ENCODE measurements at regions of chr17 and their contacts with region 1.

Region 1: DNA sequence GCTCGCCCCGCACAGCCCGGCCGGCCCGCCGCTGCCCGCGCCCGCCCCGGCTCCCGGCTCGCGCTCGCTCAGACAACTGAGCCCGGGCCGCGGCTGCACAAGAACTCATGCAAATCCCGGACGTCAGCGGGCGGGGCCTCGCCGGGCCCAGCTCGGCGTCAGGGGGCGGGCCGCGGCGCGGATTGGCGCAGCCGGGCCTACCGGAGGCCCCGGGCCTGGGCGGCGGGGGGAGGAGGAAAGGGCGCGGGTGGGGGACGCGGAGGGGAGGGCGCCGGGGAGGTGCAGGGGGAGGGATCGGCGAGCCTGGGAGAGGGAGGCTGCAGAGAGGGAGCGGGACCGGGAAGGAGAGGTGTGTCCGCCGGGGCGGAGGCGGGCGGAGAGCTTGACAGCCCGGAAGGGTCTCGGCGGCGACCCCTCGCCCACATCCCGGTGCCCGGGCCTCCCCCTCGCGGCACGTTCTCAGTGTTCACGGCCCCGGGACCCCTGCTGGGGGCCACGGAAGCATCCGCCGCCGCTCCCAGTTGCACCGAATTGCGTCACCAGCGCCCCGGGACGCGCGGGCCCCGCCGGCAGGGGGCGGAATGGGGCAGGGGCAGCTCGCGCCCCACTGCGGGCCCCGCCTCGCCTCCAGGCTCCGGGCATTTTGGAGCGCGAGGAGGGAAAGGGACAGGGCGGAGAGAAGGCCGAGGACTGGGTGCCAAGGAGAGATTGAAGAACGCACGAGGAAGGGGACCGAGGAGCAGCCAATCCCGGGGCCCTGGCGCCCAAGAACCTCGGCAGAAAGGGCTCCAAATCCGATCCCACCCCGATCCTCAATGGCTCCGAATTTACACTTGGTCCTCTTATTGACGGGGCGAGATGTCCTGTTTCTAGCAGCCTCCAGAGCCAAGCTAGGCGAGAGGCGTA is at the start of gene CBX4:
- DNase-seq: peak; percentile 87 to 97
- ATAC-seq: peak; percentile 61 to 73
- H3K4me3 ChIP-seq: peak within 1 kb of the TSS; percentile 82
- H3K27ac ChIP-seq: peak within 1 kb of the TSS; percentile 95 to 98
- H3K4me1 ChIP-seq: peaks cover 52% of the 10 kb centered on the region
- CTCF ChIP-seq: peak; percentile 99
- EP300 ChIP-seq: peak in 1 of 2 experiments; percentile 55; a peak in 1 of 5 replicates
- POLR2A ChIP-seq: peak; percentile 77
- RAD21 ChIP-seq: peak; percentile 55 to 90
- polyA plus RNA-seq, gene CBX4: 21.9 and 34.1 TPM in 2 replicates

Region 2: DNA sequence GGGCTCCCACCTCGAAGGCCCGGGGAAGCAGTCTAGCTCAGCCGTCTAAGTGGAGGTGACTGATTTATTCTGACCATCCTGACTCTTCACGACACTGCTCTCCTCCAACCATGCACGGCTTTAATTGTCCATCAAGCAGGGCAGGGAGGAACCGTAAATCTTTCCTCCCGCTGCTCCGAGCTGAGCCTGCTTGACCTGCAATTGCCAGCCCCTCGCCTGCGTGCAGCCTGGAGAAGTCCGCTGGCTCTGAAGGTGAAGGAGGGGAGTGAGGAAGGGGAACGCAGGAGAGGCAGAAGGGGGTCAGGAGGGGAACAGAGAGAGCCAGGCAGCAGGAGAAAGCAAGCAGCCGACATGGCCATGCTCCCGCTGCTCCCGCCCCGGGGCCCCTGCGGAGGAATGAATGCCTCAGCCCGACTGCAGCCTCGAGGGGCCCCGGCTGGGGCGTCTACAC is 238.9 kb before region 1 on chr17:
- CTCF ChIA-PET with region 1: no interaction called
- POLR2A ChIA-PET with region 1: no interaction called
- DNase-seq: no peak
- ATAC-seq: no peak; a peak in 1 of 6 replicates
- H3K4me3 ChIP-seq: no peak overlapping the region
- H3K27ac ChIP-seq: no peak overlapping the region
- H3K4me1 ChIP-seq: no peaks in the 10 kb centered on the region
- CTCF ChIP-seq: no peak
- EP300 ChIP-seq: no peak
- POLR2A ChIP-seq: no peak
- RAD21 ChIP-seq: no peak

Region 3: DNA sequence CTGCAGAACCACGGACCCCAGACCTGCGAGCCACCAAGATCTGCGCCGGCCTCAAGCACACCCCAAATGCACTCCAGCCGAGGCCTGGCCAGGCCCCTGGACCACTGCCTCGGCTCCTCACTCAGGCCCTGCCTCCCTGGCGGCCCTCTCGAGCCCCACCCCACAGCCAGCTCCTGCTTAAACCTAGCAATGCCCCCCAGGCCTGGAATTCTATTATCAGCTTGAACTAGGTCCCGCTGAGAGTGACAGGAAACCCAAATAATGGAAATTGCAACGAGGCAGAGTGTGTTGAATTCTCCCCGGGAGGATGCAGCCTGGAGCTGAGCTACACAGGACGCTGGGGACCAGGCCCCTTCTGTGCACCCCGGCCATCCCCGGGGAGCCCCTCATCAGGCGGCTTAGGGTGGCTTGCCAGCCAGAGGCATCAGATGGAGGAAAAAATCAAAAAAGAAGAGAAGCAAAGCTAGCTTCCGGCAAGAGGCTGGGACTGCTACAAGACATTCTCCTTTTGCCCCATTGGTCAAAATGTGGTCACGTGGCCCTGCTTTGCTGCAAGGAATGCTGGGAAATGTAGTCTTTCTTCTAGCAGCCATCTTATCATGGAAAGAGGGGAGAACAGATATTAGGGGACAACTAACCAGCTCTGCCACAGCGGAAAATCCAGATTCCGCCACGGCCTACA is 111.2 kb before region 1 on chr17:
- CTCF ChIA-PET with region 1: no interaction called
- POLR2A ChIA-PET with region 1: no interaction called
- DNase-seq: peak; percentile 95 to 100
- ATAC-seq: peak; percentile 78 to 93
- H3K4me3 ChIP-seq: no peak overlapping the region
- H3K27ac ChIP-seq: peak overlapping the region; percentile 64 to 74
- H3K4me1 ChIP-seq: no peaks in the 10 kb centered on the region
- CTCF ChIP-seq: no peak
- EP300 ChIP-seq: no peak
- POLR2A ChIP-seq: no peak
- RAD21 ChIP-seq: no peak

Region 4: GRCh38 chr17:79777894-79778503 is 61.6 kb before region 1 on chr17 and contains the start of gene CBX2:
- CTCF ChIA-PET with region 1: interaction called, 12 read pairs
- POLR2A ChIA-PET with region 1: interaction called, 4 read pairs
- DNase-seq: peak; percentile 75 to 92
- ATAC-seq: peak; percentile 64 to 72
- H3K4me3 ChIP-seq: peak within 1 kb of the TSS; percentile 93
- H3K27ac ChIP-seq: peak within 1 kb of the TSS; percentile 91 to 98
- H3K4me1 ChIP-seq: peaks cover 21% of the 10 kb centered on the region
- CTCF ChIP-seq: no peak
- EP300 ChIP-seq: no peak
- POLR2A ChIP-seq: peak; percentile 93
- RAD21 ChIP-seq: no peak
- polyA plus RNA-seq, gene CBX2: 7.4 and 8.2 TPM in 2 replicates

Region 5: GRCh38 chr17:79810130-79811010 is 29.2 kb before region 1 on chr17:
- CTCF ChIA-PET with region 1: interaction called, 1,281 read pairs
- POLR2A ChIA-PET with region 1: interaction called, 84 read pairs
- DNase-seq: peak; percentile 90 to 92
- ATAC-seq: peak; percentile 55 to 80
- H3K4me3 ChIP-seq: peak overlapping the region; percentile 51
- H3K27ac ChIP-seq: peak overlapping the region; percentile 95 to 99
- H3K4me1 ChIP-seq: peaks cover 40% of the 10 kb centered on the region
- CTCF ChIP-seq: no peak
- EP300 ChIP-seq: no peak
- POLR2A ChIP-seq: peak; percentile 33; the same call in 1 of the 2 replicates
- RAD21 ChIP-seq: no peak

Region 6: GRCh38 chr17:79861413-79862216 is 22.0 kb after region 1 on chr17:
- CTCF ChIA-PET with region 1: interaction called, 66 read pairs
- POLR2A ChIA-PET with region 1: interaction called, 4 read pairs
- DNase-seq: no peak
- ATAC-seq: peak in 1 of 2 experiments; percentile 13; a peak in 1 of 6 replicates
- H3K4me3 ChIP-seq: no peak overlapping the region
- H3K27ac ChIP-seq: no peak overlapping the region
- H3K4me1 ChIP-seq: no peaks in the 10 kb centered on the region
- CTCF ChIP-seq: no peak
- EP300 ChIP-seq: no peak
- POLR2A ChIP-seq: no peak
- RAD21 ChIP-seq: no peak

Region 7: DNA sequence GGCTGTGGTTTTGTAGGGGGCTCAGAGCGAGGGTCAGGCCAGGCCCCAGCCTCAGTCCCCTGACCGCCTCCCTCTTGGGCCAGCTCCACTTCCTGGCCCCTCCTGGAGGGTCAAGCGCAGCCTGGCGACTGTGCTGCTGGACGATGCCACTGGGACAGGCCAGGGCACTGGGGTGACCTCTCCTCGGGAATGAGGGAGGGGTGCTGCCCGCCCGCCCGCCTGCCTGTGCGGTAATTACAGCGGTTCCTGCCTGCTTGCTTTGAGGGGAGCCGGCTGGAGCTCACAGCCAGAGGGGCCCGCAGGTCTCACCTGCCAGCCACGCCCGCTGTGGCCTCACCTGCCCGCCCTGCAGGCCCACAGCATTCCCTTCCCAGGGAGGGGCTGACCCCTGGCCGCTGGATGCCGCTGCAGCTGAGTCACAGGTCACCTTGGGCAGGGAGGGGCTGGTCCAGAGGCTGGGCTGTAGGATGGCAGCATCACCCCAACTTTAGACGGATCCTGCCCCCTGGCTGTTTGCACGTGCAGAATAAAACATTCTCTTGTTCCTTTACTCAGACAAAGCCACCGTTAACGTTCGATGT is 76.3 kb after region 1 on chr17:
- CTCF ChIA-PET with region 1: interaction called, 44 read pairs
- POLR2A ChIA-PET with region 1: interaction called, 28 read pairs
- DNase-seq: peak; percentile 77 to 82
- ATAC-seq: peak; percentile 48 to 52; a peak in 5 of 6 replicates
- H3K4me3 ChIP-seq: no peak overlapping the region
- H3K27ac ChIP-seq: peak overlapping the region; percentile 45 to 75; a peak in 5 of 6 replicates
- H3K4me1 ChIP-seq: peaks cover 35% of the 10 kb centered on the region
- CTCF ChIP-seq: peak; percentile 56
- EP300 ChIP-seq: no peak
- POLR2A ChIP-seq: no peak
- RAD21 ChIP-seq: peak; percentile 81 to 86

Region 8: DNA sequence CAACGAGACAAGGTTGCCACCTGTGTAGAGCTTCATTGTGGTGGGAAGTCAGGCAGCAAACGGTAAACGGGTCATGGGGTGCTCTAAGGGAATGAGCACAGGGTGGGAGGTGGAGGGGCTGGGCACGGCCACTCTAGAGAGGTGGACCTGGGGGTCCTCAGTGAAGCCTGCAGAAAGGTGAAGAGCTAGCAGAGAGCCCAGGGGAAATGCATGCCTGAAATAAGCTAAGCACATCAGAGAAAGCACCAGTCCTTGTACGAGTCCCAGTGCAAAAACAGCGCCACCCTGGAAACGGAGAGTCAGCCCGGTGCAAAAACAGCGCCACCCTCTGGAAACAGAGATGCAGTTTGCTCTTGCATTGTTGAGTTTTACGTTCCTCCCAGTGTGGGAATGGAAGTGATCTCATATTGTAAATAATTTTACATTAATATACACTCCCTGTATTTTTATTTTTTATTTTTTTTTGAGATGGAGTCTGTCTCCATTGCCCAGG is 131.0 kb after region 1 on chr17:
- CTCF ChIA-PET with region 1: interaction called, 12 read pairs
- POLR2A ChIA-PET with region 1: interaction called, 5 read pairs
- DNase-seq: peak in 1 of 2 experiments; percentile 75
- ATAC-seq: peak in 1 of 2 experiments; percentile 64; a peak in 3 of 6 replicates
- H3K4me3 ChIP-seq: no peak overlapping the region
- H3K27ac ChIP-seq: no peak overlapping the region
- H3K4me1 ChIP-seq: no peaks in the 10 kb centered on the region
- CTCF ChIP-seq: peak; percentile 63
- EP300 ChIP-seq: no peak
- POLR2A ChIP-seq: no peak
- RAD21 ChIP-seq: peak; percentile 57 to 68

Measured in A549 (cell line).